PC-9 (cell line): ENCODE measurements at regions of chr3 and their contacts with region 1.

Region 1: DNA sequence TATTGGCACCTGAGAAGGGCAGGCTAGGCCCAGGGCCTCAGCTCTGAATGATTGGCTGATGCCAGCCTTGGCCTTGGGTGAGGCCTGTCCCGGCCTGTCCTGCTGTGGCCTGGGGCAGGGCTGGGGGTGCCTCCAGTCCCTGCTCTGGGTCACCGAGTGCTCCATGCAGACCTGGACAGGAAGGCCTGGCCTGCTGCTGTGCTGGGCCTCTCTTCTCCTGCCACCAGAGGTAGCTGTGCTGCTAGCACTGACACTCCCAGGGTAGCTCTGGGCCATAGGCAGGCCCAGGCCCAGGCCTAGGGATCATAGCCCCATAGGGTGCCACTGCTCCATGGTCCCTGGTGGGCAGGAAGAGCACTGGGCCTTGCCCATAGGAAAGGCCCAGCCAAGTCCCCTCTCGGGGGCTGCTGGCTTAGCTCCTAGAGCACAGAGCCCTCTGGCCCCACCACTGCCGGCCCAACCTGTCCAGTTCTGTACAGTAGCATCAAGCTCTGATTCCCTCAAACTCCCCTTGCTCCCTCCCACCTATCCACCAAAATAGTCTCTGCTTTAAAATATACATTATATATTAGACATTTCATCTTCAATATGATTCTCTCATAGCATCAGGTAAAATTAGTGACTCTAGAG is 18.2 kb downstream of the ABTB1 start:
- DNase-seq: peak; percentile 41 to 70
- H3K4me3 ChIP-seq: no peak overlapping the region
- H3K27ac ChIP-seq: peak overlapping the region; percentile 94
- H3K4me1 ChIP-seq: peaks cover 23% of the 10 kb centered on the region
- H3K27me3 ChIP-seq: no peaks in the 10 kb centered on the region
- CTCF ChIP-seq: peak; percentile 67

Region 2: GRCh38 chr3:127105587-127105986 is 585.4 kb before region 1 on chr3:
- CTCF ChIA-PET with region 1: no interaction called
- POLR2A ChIA-PET with region 1: no interaction called
- intact Hi-C with region 1: no loop called
- DNase-seq: no peak
- H3K4me3 ChIP-seq: no peak overlapping the region
- H3K27ac ChIP-seq: no peak overlapping the region
- H3K4me1 ChIP-seq: no peaks in the 10 kb centered on the region
- H3K27me3 ChIP-seq: peaks cover 13% of the 10 kb centered on the region
- CTCF ChIP-seq: no peak

Region 3: GRCh38 chr3:127590593-127591477 is 100.1 kb before region 1 on chr3 and contains the start of gene TPRA1:
- CTCF ChIA-PET with region 1: no interaction called
- POLR2A ChIA-PET with region 1: no interaction called
- intact Hi-C with region 1: loop called (anchors 2 kb)
- DNase-seq: peak; percentile 94 to 96
- H3K4me3 ChIP-seq: peak within 1 kb of the TSS; percentile 70
- H3K27ac ChIP-seq: peak within 1 kb of the TSS; percentile 92
- H3K4me1 ChIP-seq: peaks cover 22% of the 10 kb centered on the region
- H3K27me3 ChIP-seq: no peaks in the 10 kb centered on the region
- CTCF ChIP-seq: no peak
- total RNA-seq, gene TPRA1: 58.5 and 66.5 TPM in 2 replicates

Region 4: GRCh38 chr3:127672516-127673190 is 18.3 kb before region 1 on chr3 and contains the start of gene ABTB1:
- CTCF ChIA-PET with region 1: no interaction called
- POLR2A ChIA-PET with region 1: no interaction called
- intact Hi-C with region 1: loop called (anchors 2 kb)
- DNase-seq: peak; percentile 54 to 79
- H3K4me3 ChIP-seq: peak within 1 kb of the TSS; percentile 85
- H3K27ac ChIP-seq: peak within 1 kb of the TSS; percentile 56
- H3K4me1 ChIP-seq: peaks cover 7% of the 10 kb centered on the region; the same call in 1 of the 2 replicates
- H3K27me3 ChIP-seq: no peaks in the 10 kb centered on the region
- CTCF ChIP-seq: no peak
- total RNA-seq, gene ABTB1: 39.1 and 57.1 TPM in 2 replicates

Region 5: DNA sequence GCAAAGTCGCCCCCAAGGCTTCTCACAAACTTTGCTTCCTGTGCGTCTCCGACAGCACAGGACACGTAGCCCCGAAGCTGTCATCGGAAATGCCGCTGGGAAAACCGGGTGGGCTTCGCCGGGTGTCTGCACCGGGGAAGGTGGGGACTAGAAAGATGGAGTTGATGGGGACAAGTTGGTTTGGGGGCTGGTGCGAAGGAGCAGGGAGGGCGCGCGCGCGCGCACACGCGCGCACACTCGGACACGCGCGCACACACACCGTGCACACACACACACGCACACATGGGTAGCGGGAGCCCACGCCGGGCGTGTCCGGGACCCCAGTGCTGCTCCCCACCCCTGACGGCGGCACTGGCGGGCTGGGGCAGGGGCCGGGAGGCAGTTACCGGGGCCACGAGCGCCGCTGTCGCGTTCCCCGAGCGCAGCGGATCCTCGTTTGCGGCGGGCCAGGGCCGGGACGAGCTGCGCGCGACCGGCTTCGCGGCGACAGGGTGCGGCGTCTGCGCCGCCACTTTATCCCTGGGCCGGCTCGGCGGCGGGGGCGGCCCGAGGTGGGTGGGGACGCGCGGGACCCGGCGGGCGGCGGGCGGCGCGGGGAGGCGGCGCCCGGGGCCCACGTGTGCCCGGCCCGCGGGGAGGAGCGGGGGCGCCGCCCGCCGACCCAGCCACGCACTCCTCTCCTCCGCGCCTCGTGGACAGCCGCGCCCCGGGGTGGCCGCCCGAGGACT is 131.9 kb after region 1 on chr3:
- CTCF ChIA-PET with region 1: interaction called, 8 read pairs
- POLR2A ChIA-PET with region 1: interaction called, 3 read pairs
- intact Hi-C with region 1: loop called (anchors 1 kb)
- DNase-seq: peak in 1 of 2 experiments; percentile 49
- H3K4me3 ChIP-seq: peak overlapping the region; percentile 76
- H3K27ac ChIP-seq: peak overlapping the region; percentile 93
- H3K4me1 ChIP-seq: peaks cover 44% of the 10 kb centered on the region
- H3K27me3 ChIP-seq: no peaks in the 10 kb centered on the region
- CTCF ChIP-seq: no peak

Region 6: GRCh38 chr3:127959846-127960245 is 268.9 kb after region 1 on chr3:
- CTCF ChIA-PET with region 1: interaction called, 7 read pairs
- POLR2A ChIA-PET with region 1: no interaction called
- intact Hi-C with region 1: loop called (anchors 1 kb)
- DNase-seq: peak; percentile 69 to 85
- H3K4me3 ChIP-seq: no peak overlapping the region
- H3K27ac ChIP-seq: no peak overlapping the region
- H3K4me1 ChIP-seq: peaks cover 34% of the 10 kb centered on the region
- H3K27me3 ChIP-seq: no peaks in the 10 kb centered on the region
- CTCF ChIP-seq: peak; percentile 63